ENCODE measurements at regions of chr14 and their contacts with region 1.

Region 1: GRCh38 chr14:50773632-50774541 is 57.1 kb downstream of the NIN start:
- ATAC-seq: peak; percentile 41 to 97 (median 80)
- H3K4me3 ChIP-seq: no peak overlapping the region
- H3K27ac ChIP-seq: no peak overlapping the region
- H3K4me1 ChIP-seq: no peaks in the 10 kb centered on the region

Region 2: GRCh38 chr14:50432131-50432530 is 341.8 kb before region 1 on chr14:
- in situ Hi-C with region 1: no loop called
- ATAC-seq: no peak
- H3K4me3 ChIP-seq: no peak overlapping the region
- H3K27ac ChIP-seq: no peak overlapping the region
- H3K4me1 ChIP-seq: no peaks in the 10 kb centered on the region

Region 3: DNA sequence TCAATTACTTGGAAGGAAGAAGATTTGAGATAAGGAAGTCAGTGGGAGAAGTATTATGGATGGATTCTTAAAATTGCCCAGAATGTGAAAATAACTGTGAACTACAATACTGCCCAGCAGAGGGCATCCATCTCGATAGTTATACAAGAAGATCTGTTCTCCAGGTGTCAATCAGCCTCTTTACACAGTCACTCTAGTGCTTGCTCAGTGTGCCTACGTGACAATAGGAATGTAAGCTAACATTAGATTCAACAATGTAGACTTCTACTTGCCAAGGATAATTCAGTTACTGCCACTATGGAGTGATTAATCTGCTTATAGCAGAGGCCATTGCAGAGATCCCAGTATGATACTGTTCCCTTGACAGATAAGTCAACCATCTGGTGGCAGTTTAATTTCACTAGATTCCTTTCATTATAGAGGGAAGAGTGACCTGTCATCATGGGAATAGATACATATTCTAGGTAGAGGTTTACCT is 230.9 kb before region 1 on chr14:
- in situ Hi-C with region 1: loop called in 1 of 9 experiments (anchors 5 kb)
- ATAC-seq: peak; percentile 45 to 82 (median 68)
- H3K4me3 ChIP-seq: no peak overlapping the region
- H3K27ac ChIP-seq: no peak overlapping the region
- H3K4me1 ChIP-seq: peaks cover 0 to 5% of the 10 kb centered on the region in 2 donors

Region 4: DNA sequence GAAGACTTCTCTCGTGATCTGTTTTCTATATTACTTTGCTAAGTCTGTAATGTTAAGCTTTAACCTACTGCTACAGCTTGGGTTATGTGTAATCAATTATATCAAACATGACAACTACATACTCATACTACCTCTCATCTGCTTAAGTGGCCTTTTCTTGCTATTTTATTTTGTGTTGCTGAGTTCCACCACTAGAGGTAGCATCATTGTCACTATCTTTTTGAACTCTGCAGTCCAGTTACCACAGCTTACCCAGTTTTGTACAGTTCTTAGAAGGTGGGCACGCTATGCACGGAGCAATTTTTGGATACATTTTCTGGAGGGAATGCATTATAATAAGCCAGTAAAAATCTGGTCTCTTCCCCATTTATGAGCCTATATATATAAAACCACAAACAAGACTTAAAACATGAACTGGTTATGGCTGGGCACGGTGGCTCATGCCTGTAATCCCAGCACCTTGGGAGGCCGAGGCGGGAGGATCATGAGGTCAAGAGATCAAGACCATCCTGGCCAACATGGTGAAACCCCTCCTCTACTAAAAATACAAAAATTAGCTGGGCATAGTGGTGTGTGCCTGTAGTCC is 154.2 kb before region 1 on chr14:
- in situ Hi-C with region 1: loop called in 1 of 9 experiments (anchors 25 kb)
- ATAC-seq: peak in 4 of 8 experiments; percentile 60 to 79 (median 72)
- H3K4me3 ChIP-seq: no peak overlapping the region
- H3K27ac ChIP-seq: no peak overlapping the region
- H3K4me1 ChIP-seq: no peaks in the 10 kb centered on the region

Measured in motor neuron (in vitro differentiated cells).